ENCODE measurements at regions of chr20 and their contacts with region 1.

Region 1: GRCh38 chr20:45011108-45011526 is 44.8 kb downstream of the STK4 start:
- DNase-seq: peak; percentile 83
- H3K4me3 ChIP-seq: peak overlapping the region; percentile 26; the same call in 1 of the 2 replicates
- H3K27ac ChIP-seq: peak overlapping the region; percentile 71
- H3K4me1 ChIP-seq: peaks cover 72% of the 10 kb centered on the region
- H3K27me3 ChIP-seq: no peaks in the 10 kb centered on the region

Region 2: GRCh38 chr20:45095753-45096371 is 84.7 kb after region 1 on chr20:
- in situ Hi-C with region 1: loop called (anchors 10 kb)
- DNase-seq: peak; percentile 66
- H3K4me3 ChIP-seq: no peak overlapping the region
- H3K27ac ChIP-seq: no peak overlapping the region
- H3K4me1 ChIP-seq: peaks cover 5% of the 10 kb centered on the region
- H3K27me3 ChIP-seq: 0 out of 2 replicates have a peak, but pooled peaks cover 3% of the 10 kb centered on the region

Region 3: DNA sequence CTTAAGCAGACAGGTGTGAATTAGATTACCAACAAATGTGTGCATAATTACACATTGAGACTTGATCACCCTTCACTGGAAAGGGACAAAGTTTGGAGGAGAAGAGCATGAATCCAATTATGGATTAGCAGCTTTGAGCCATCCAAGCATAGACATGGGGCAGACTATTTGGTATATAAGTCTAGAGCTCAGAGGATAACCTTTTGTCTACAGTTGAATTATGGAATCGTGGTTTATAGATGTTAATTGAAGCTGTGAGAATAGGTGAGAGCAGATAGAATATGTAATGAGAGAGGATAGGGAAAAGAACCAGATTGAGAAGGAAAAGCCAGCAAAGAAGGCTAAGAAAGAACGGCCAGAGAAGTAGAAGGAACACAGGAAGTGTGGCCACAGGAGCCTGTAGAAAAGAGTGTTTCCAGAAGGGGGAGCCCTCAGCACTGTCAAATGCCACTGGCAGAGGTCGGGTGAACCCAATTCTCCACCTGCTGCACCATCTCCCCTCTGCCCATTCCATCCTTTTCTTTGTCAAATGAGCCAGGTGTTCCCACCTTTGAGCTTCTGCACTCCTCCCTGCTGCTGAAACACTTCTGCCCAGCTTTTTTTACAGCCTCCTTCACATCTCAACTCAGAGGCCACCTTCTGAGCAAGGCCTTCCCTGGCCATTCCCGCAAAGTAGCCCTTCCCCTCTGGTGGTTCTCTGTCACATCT is 788.0 kb after region 1 on chr20:
- in situ Hi-C with region 1: loop called (anchors 25 kb)
- DNase-seq: peak; percentile 70
- H3K4me3 ChIP-seq: no peak overlapping the region
- H3K27ac ChIP-seq: no peak overlapping the region
- H3K4me1 ChIP-seq: no peaks in the 10 kb centered on the region
- H3K27me3 ChIP-seq: no peaks in the 10 kb centered on the region

Region 4: GRCh38 chr20:46243707-46244628 is 1232.9 kb after region 1 on chr20:
- in situ Hi-C with region 1: no loop called
- DNase-seq: peak; percentile 64
- H3K4me3 ChIP-seq: no peak overlapping the region
- H3K27ac ChIP-seq: no peak overlapping the region
- H3K4me1 ChIP-seq: no peaks in the 10 kb centered on the region
- H3K27me3 ChIP-seq: peaks cover 17% of the 10 kb centered on the region

Measured in GM23248 (cell line).